ENCODE measurements at regions of chr9 and their contacts with region 1.

Region 1: DNA sequence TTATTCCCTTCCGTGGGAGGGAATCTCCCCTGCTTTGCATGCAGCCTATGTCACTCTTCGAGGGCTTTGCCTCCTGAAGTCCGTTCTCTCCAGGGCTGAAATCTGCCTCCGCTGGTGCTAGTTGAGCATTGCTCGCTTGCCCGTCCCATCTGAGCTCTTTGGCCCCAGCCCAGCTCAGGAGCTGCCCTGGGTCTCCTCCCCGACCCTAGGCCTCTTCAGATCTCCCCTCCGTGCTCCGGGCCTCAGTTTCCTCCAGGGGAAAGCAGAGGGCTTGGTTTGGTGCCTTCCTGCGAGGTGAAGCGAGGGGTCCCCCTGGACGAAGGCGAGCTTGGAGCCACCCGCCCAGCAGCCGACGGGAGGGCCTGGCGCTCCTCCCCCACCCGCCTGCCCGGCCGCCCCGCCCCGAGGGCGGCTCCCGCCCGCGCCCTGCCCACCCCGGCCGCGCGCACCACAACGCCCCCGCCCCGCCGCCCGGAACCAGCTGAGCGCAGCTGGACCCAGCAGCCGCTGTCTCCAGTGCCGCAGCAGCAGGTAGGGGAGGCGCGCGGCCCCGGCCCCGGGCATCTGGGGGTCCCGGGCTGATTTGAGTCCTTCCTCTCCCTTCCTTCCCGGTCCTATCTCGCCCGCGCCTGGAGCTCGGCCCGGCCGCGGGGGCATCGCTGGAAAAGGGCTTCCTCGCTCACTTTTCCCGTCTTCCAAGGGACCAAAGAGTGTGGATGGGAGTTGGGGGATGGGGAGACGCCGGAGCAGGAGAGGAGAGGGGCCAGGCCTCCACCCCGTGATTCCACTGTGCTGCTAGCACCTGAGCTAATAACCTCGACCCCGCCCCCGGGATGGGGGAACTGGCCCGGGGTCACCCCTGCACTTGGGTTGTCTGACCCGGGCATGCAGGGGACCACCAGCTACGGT is at the start of gene GSN:
- DNase-seq: peak; percentile 94
- total RNA-seq, gene GSN: 590 to 1,544 TPM

Region 2: GRCh38 chr9:121222524-121223171 is 45.3 kb before region 1 on chr9:
- intact Hi-C with region 1: loop called in 1 of 2 experiments (anchors 5 kb)
- DNase-seq: no peak

Region 3: DNA sequence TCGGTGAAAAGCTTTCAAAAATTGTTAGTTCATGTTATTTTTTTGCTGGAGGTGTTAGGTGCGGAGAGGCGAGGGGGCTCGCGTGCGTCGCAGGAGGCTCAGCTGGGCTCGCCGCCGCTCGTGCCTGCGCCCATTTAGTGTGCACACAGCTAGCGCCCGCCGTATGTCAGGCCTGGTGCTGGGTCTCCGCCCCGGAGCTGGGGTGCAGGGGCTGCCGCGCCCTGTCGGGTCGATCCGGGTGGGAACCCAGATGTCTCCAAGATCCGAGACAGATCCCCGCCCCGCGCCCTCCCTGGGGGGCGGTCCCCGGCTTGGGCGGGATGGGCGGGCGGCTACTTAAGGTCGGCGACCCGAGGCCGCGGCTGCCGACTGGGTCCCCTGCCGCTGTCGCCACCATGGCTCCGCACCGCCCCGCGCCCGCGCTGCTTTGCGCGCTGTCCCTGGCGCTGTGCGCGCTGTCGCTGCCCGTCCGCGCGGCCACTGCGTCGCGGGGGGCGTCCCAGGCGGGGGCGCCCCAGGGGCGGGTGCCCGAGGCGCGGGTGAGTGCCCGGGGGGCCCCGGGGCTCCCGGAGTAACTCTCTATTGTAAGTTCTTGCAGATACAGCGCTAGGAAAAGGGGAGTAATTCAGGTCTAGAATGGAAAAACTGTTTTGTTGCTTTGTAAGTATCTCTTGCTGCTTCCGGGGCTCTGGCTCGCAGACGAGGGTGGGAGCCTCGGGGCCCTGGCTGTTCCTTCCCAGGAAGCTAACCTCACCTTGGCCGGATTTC is 31.7 kb after region 1 on chr9:
- intact Hi-C with region 1: loop called in 1 of 2 experiments (anchors 5 kb)
- DNase-seq: peak; percentile 93

Measured in posterior vena cava (tissue), 2 donors.